ENCODE measurements at regions of chr14 and their contacts with region 1.

Region 1: DNA sequence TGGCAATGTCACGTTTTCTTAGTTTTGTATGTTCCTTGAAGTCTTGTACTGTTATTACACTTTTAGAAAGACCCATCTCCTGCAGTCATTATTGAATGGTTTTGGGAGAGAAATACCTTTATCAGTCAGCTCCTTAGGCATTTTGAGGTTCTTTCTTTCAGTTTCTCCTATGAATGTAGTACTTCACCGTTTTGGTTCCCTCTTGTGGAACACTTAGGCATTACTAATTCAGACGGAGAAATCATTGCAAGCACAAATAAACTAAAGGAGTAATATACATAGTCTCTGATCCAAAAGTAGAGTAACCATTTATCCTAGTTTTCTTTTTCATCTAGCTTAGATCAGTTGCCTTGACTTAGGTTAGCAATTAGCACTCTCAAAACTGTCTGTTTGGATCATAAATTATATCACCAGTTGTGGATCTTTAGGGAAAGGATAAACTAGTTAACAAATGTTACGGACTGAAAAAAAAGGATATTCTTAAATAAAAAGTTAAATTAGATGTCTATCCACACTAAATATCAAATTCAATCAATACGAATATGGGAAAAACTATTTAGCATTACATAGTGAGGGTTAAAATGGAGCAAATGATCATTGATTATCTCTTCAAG is 1538.3 kb upstream of the SEL1L start:
- DNase-seq: no peak
- H3K4me3 ChIP-seq: no peak overlapping the region
- H3K27ac ChIP-seq: no peak overlapping the region
- H3K4me1 ChIP-seq: no peaks in the 10 kb centered on the region
- H3K27me3 ChIP-seq: peaks cover 0 to 1% (median 0%) of the 10 kb centered on the region in 4 experiments; a peak in 1 of 7 replicates
- CTCF ChIP-seq: peak in 2 of 3 experiments; percentile 25 to 57; a peak in 2 of 4 replicates
- EP300 ChIP-seq: no peak
- POLR2A ChIP-seq: no peak
- RAD21 ChIP-seq: peak; percentile 51 to 61

Region 2: GRCh38 chr14:82710267-82710841 is 361.6 kb before region 1 on chr14:
- CTCF ChIA-PET with region 1: interaction called, 10 read pairs
- POLR2A ChIA-PET with region 1: no interaction called
- DNase-seq: peak; percentile 27 to 86
- H3K4me3 ChIP-seq: no peak overlapping the region
- H3K27ac ChIP-seq: no peak overlapping the region
- H3K4me1 ChIP-seq: no peaks in the 10 kb centered on the region
- H3K27me3 ChIP-seq: no peaks in the 10 kb centered on the region
- CTCF ChIP-seq: peak; percentile 73 to 86 (median 85)
- EP300 ChIP-seq: no peak
- POLR2A ChIP-seq: no peak
- RAD21 ChIP-seq: peak; percentile 96

Region 3: GRCh38 chr14:83053022-83053710 is 18.8 kb before region 1 on chr14:
- CTCF ChIA-PET with region 1: interaction called, 18 read pairs
- POLR2A ChIA-PET with region 1: no interaction called
- DNase-seq: no peak
- H3K4me3 ChIP-seq: no peak overlapping the region
- H3K27ac ChIP-seq: no peak overlapping the region
- H3K4me1 ChIP-seq: no peaks in the 10 kb centered on the region
- H3K27me3 ChIP-seq: no peaks in the 10 kb centered on the region
- CTCF ChIP-seq: no peak
- EP300 ChIP-seq: no peak
- POLR2A ChIP-seq: no peak
- RAD21 ChIP-seq: no peak